A673 (cell line): ENCODE measurements at regions of chr6 and their contacts with region 1.

Region 1: DNA sequence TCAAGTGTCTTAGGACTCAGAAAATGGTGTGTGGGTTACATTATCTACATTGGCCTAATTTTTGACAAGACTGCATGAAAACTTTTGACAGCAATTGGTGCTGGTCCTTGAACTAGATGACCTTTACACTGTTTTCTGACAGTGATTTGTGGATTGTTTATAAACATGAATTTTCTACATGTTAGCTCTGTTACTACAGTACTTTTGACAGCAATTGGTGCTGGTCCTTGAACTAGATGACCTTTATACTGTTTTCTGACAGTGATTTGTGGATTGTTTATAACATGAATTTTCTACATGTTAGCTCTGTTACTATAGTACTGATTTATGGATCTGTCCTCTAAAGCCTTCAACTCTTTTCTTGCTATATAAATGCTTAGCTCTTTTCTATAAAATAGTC is 16.7 kb downstream of the KCTD20 start:
- DNase-seq: no peak
- H3K4me3 ChIP-seq: no peak overlapping the region
- H3K27ac ChIP-seq: no peak overlapping the region
- H3K4me1 ChIP-seq: no peaks in the 10 kb centered on the region
- H3K27me3 ChIP-seq: no peaks in the 10 kb centered on the region
- CTCF ChIP-seq: no peak

Region 2: DNA sequence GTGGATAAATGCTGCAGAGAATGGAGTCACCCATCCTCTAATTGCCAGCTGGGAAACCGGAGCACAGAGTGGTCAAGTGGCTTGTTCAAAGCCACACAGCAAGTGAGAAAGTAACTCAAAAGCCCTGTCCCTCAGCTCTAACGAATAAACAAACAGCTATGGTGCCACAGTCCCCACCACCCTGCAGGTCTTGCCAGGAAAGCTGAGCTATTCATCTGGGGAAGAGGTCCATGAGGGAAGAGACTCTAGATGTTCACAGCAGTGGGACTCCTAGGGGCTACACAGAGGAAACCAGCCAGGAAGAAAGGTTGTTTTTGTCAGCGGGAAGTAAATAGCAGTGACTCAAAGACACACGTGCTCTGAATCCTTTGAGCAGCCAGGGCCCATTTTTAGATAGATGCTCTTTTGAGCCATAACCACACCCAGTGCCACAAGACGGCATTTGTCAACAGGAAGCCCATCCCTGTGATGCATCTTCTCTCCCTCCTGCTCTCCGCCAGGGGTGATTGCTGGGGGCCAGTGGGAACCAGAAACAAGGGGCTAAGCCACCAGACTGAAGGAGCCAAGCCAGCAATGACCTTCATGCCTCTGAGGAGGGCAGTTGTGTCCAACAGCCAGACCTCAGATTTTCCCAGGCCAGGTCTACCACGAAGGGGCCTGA is 1285.9 kb before region 1 on chr6:
- CTCF ChIA-PET with region 1: no interaction called
- POLR2A ChIA-PET with region 1: interaction called, 19 read pairs
- intact Hi-C with region 1: no loop called
- DNase-seq: no peak
- H3K4me3 ChIP-seq: no peak overlapping the region
- H3K27ac ChIP-seq: no peak overlapping the region
- H3K4me1 ChIP-seq: no peaks in the 10 kb centered on the region
- H3K27me3 ChIP-seq: no peaks in the 10 kb centered on the region
- CTCF ChIP-seq: no peak

Region 3: DNA sequence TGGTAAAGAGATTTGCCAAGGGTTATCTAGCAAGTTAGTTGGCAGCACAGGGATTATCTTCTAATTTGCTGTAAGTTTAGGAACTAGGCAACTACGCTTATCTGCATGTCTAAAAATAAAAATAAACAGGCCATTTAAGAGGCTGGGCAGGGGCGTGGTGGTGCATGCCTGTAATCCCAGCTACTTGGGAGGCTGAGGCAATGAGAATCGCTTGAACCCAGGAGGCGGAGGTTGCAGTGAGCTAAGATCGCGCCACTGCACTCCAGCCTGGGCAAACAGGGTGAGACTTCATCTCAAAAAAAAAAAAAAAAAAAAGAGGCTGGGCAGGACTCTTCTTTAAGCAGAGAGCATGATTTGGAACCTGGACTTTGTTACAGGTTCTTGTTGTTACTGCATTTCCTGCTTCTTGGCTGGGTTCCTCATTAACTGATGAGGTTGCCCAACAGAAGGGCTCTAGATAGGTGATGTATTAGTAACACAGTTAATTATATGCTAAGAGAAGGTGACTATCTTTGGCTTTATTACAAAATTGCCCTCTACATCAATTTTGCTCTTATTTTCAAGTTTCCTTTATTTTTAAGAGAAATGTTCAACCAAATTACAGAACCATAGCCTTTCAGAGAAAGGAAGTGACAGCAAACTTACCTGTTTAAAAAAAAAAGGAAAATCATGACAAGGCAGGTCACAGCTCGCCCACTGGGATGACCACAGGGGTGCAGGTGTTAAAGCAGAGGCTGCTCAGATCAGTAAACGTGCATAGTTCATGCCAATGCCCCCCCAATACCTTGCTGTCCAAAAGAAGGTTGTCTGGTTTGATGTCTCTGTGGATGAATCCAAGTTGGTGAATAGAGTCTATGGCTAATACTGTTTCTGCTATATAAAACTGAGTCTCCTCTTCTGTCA is 55.3 kb after region 1 on chr6:
- CTCF ChIA-PET with region 1: no interaction called
- POLR2A ChIA-PET with region 1: no interaction called
- intact Hi-C with region 1: no loop called
- DNase-seq: no peak
- H3K4me3 ChIP-seq: no peak overlapping the region
- H3K27ac ChIP-seq: no peak overlapping the region
- H3K4me1 ChIP-seq: no peaks in the 10 kb centered on the region
- H3K27me3 ChIP-seq: no peaks in the 10 kb centered on the region
- CTCF ChIP-seq: no peak